B cell (primary cell): ENCODE measurements at regions of chr10 and their contacts with region 1.

Region 1: GRCh38 chr10:94362360-94363250 is at the start of gene NOC3L:
- DNase-seq: peak; percentile 98
- ATAC-seq: peak; percentile 97
- H3K4me3 ChIP-seq: peak within 1 kb of the TSS; percentile 66 to 95 (median 86)
- H3K4me3 Mint-ChIP-seq: peak within 1 kb of the TSS; percentile 98
- H3K27ac ChIP-seq: peak within 1 kb of the TSS; percentile 94 to 95
- H3K27ac Mint-ChIP-seq: peak within 1 kb of the TSS; percentile 98
- H3K4me1 ChIP-seq: peaks cover 16 to 18% of the 10 kb centered on the region in 2 donors
- H3K4me1 Mint-ChIP-seq: peaks cover 36% of the 10 kb centered on the region
- H3K27me3 ChIP-seq: peaks cover 0 to 5% (median 2%) of the 10 kb centered on the region in 4 experiments
- H3K27me3 Mint-ChIP-seq: peaks cover 11% of the 10 kb centered on the region
- CTCF ChIP-seq: peak; percentile 92
- total RNA-seq, gene NOC3L: 37.5 and 42.0 TPM in 2 replicates

Region 2: DNA sequence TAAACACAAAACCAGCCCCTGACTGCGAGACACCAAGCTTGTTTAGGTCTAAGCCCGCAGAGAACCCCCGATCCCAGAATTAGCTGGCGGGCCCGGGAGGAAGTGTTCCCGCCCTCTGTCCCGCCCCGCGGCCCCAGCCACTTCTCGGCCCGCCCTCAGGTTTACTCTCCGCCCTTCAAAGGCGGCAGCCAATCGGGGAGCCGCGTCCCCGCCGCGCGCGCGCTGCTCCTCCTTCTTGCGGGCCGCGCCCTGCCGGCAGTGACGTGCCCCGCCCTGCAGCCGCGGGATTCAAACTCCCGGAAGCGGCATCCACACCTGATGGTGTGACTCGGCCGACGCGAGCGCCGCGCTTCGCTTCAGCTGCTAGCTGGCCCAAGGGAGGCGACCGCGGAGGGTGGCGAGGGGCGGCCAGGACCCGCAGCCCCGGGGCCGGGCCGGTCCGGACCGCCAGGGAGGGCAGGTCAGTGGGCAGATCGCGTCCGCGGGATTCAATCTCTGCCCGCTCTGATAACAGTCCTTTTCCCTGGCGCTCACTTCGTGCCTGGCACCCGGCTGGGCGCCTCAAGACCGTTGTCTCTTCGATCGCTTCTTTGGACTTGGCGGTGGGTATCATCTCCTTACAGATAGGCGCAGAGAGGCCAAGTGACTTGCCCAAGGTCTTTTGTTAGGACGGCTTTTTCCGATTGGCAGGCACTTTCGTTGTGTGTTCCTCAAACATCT is 866.1 kb before region 1 on chr10 and contains the start of gene CEP55:
- CTCF ChIA-PET with region 1: no interaction called
- POLR2A ChIA-PET with region 1: no interaction called
- intact Hi-C with region 1: loop called (anchors 1 kb)
- DNase-seq: peak; percentile 94
- ATAC-seq: peak; percentile 99
- H3K4me3 ChIP-seq: peak within 1 kb of the TSS; percentile 67 to 97 (median 81)
- H3K4me3 Mint-ChIP-seq: peak within 1 kb of the TSS; percentile 93
- H3K27ac ChIP-seq: peak within 1 kb of the TSS in 1 of 2 donors; percentile 44
- H3K27ac Mint-ChIP-seq: peak within 1 kb of the TSS; percentile 67
- H3K4me1 ChIP-seq: peaks cover 8 to 16% of the 10 kb centered on the region in 2 donors
- H3K4me1 Mint-ChIP-seq: peaks cover 15% of the 10 kb centered on the region
- H3K27me3 ChIP-seq: peaks cover 0 to 4% (median 1%) of the 10 kb centered on the region in 4 experiments
- H3K27me3 Mint-ChIP-seq: peaks cover 8% of the 10 kb centered on the region
- CTCF ChIP-seq: no peak
- total RNA-seq, gene CEP55: 0.19 and 0.27 TPM in 2 replicates

Region 3: DNA sequence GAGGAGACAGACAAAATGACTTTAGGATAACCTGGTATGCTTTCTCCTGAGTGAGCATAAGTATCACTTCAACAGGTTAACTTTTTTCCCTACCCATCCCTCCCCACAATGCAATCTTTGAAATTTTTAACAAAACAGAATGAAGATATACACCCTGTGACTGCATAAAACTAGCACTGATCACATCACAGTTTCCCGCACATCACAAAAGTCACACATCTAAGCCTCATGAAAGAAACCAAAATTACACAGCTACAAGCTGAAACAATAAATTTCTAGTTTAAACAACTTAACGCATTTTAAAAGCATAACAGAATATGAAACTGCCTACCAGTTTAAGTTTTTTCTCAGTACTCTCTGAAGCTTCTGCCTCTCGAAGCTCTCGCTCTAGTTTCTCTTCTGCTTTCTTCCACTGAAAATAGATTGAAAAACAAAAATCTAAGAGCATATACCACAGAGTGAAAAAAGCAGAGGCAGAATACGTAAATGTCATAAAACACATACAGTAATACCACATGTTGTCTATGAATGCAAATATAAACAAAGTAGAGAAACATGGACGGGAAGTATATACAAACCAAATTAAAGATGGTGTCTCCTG is 18.0 kb before region 1 on chr10:
- CTCF ChIA-PET with region 1: interaction called, 23 read pairs
- POLR2A ChIA-PET with region 1: interaction called, 6 read pairs
- intact Hi-C with region 1: loop called (anchors 1 kb)
- DNase-seq: peak; percentile 70
- ATAC-seq: peak; percentile 85
- H3K4me3 ChIP-seq: peak overlapping the region in 4 of 5 experiments; percentile 20 to 52 (median 36)
- H3K4me3 Mint-ChIP-seq: peak overlapping the region; percentile 89
- H3K27ac ChIP-seq: peak overlapping the region; percentile 70 to 82
- H3K27ac Mint-ChIP-seq: peak overlapping the region; percentile 93
- H3K4me1 ChIP-seq: peaks cover 17 to 25% of the 10 kb centered on the region in 2 donors
- H3K4me1 Mint-ChIP-seq: peaks cover 26% of the 10 kb centered on the region
- H3K27me3 ChIP-seq: no peaks in the 10 kb centered on the region
- H3K27me3 Mint-ChIP-seq: no peaks in the 10 kb centered on the region
- CTCF ChIP-seq: no peak

Region 4: GRCh38 chr10:94402015-94402842 is 39.6 kb after region 1 on chr10 and contains the start of gene TBC1D12:
- CTCF ChIA-PET with region 1: interaction called, 22 read pairs
- POLR2A ChIA-PET with region 1: interaction called, 15 read pairs
- intact Hi-C with region 1: loop called (anchors 1 kb)
- DNase-seq: peak; percentile 76
- ATAC-seq: peak; percentile 35
- H3K4me3 ChIP-seq: peak within 1 kb of the TSS; percentile 7 to 92 (median 79)
- H3K4me3 Mint-ChIP-seq: peak within 1 kb of the TSS; percentile 94
- H3K27ac ChIP-seq: peak within 1 kb of the TSS; percentile 76 to 86
- H3K27ac Mint-ChIP-seq: peak within 1 kb of the TSS; percentile 96
- H3K4me1 ChIP-seq: peaks cover 13 to 15% of the 10 kb centered on the region in 2 donors
- H3K4me1 Mint-ChIP-seq: peaks cover 15% of the 10 kb centered on the region
- H3K27me3 ChIP-seq: peaks cover 0 to 8% (median 0%) of the 10 kb centered on the region in 4 experiments
- H3K27me3 Mint-ChIP-seq: peaks cover 23% of the 10 kb centered on the region
- CTCF ChIP-seq: no peak
- total RNA-seq, gene TBC1D12: 9.3 and 9.6 TPM in 2 replicates

Region 5: DNA sequence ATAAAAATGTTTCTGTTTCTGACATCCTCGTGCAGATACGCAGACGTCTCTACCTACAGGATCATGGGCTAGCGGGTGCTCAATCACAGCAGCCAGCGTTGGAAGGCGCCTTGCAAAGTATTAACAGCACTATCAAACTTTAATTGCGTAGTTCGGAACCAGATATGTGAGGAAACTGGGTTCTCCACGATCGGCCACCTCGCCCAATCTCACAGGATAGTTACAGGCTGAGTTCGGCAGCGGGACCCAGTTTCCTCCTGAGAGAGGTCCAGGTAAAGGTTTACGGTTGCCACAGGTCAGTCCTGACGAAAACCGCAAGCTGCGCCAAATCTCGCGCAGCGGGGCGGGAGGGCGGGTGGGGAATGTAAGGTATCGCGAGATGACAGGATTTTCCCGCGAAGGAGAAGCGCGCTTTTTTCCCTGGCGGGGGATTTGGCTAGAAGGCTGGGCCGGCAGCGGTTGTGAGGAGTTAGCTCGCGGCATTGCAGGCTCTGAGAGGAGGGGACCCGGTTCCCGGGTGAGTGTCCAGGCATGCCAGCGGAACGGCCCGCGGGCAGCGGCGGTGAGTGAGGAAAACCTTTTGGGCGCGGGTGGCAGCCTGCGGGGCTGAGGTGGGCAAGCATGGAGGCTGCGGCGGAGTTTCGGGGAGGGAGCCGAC is 182.9 kb after region 1 on chr10 and contains the start of gene HELLS:
- CTCF ChIA-PET with region 1: no interaction called
- POLR2A ChIA-PET with region 1: no interaction called
- intact Hi-C with region 1: loop called (anchors 2 kb)
- DNase-seq: peak; percentile 84
- ATAC-seq: peak; percentile 79
- H3K4me3 ChIP-seq: peak within 1 kb of the TSS; percentile 57 to 99 (median 95)
- H3K4me3 Mint-ChIP-seq: peak within 1 kb of the TSS; percentile 94
- H3K27ac ChIP-seq: peak within 1 kb of the TSS; percentile 50 to 71
- H3K27ac Mint-ChIP-seq: peak within 1 kb of the TSS; percentile 86
- H3K4me1 ChIP-seq: peaks cover 14 to 18% of the 10 kb centered on the region in 2 donors
- H3K4me1 Mint-ChIP-seq: peaks cover 22% of the 10 kb centered on the region
- H3K27me3 ChIP-seq: no peaks in the 10 kb centered on the region
- H3K27me3 Mint-ChIP-seq: no peaks in the 10 kb centered on the region
- CTCF ChIP-seq: no peak
- total RNA-seq, gene HELLS: 26.0 and 27.4 TPM in 2 replicates